ENCODE measurements at regions of chr17 and their contacts with region 1.

Region 1: GRCh38 chr17:7021993-7022778 is 664 bp upstream of the BCL6B start:
- DNase-seq: no peak
- ATAC-seq: peak; percentile 79
- H3K4me3 ChIP-seq: peak overlapping the region; percentile 11 to 38; a peak in 3 of 4 replicates
- H3K27ac ChIP-seq: no peak overlapping the region
- H3K4me1 ChIP-seq: peaks cover 6 to 44% of the 10 kb centered on the region in 2 experiments; a peak in 3 of 4 replicates
- H3K27me3 ChIP-seq: no peaks in the 10 kb centered on the region
- CTCF ChIP-seq: peak; percentile 55 to 90 (median 88); a peak in 5 of 6 replicates
- POLR2A ChIP-seq: no peak
- RAD21 ChIP-seq: peak; percentile 85

Region 2: GRCh38 chr17:7035591-7036368 is 13.6 kb after region 1 on chr17 and contains the start of gene SLC16A13:
- CTCF ChIA-PET with region 1: interaction called, 15 read pairs
- POLR2A ChIA-PET with region 1: interaction called, 7 read pairs
- RAD21 ChIA-PET with region 1: no interaction called
- intact Hi-C with region 1: no loop called
- DNase-seq: peak; percentile 94
- ATAC-seq: peak; percentile 96
- H3K4me3 ChIP-seq: peak within 1 kb of the TSS; percentile 60 to 78
- H3K27ac ChIP-seq: peak within 1 kb of the TSS; percentile 99
- H3K4me1 ChIP-seq: peaks cover 4 to 25% of the 10 kb centered on the region in 2 experiments
- H3K27me3 ChIP-seq: no peaks in the 10 kb centered on the region
- CTCF ChIP-seq: no peak
- POLR2A ChIP-seq: peak; percentile 89
- RAD21 ChIP-seq: no peak
- total RNA-seq, gene SLC16A13: 6.8 TPM